ENCODE measurements at regions of chr14 and their contacts with region 1.

Region 1: DNA sequence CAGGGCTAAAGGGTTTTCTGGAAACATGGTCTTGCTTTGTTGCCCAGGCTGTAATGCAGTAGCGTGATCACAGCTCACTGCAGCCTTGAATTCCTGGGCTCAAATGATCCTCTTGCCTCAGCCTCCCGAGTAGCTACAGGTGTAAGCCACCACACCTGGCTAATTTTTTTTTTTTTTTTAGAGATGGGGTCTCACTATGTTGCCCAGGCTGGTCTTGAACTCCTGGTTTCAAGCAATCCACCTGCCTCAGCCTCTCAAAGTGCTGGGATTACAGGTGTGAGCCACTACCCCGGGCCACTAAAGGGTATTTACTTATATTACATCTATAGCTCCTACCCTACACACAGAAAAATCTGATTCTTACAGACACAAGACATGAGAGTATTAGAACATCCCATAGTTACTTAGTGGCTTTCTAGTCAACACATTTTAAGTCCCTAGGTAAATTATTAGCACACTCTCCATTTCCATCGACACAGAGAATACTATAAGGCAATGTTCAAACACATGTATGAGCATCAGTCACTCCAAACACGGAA is 6.2 kb upstream of the DCAF11 start:
- DNase-seq: no peak
- ATAC-seq: peak; percentile 14
- H3K4me3 ChIP-seq: no peak overlapping the region
- H3K4me3 Mint-ChIP-seq: no peak overlapping the region
- H3K27ac ChIP-seq: peak overlapping the region; percentile 44 to 68
- H3K27ac Mint-ChIP-seq: peak overlapping the region; percentile 95
- H3K4me1 ChIP-seq: peaks cover 10 to 13% of the 10 kb centered on the region in 2 donors
- H3K4me1 Mint-ChIP-seq: peaks cover 11% of the 10 kb centered on the region
- H3K27me3 ChIP-seq: no peaks in the 10 kb centered on the region
- H3K27me3 Mint-ChIP-seq: no peaks in the 10 kb centered on the region
- CTCF ChIP-seq: no peak

Region 2: DNA sequence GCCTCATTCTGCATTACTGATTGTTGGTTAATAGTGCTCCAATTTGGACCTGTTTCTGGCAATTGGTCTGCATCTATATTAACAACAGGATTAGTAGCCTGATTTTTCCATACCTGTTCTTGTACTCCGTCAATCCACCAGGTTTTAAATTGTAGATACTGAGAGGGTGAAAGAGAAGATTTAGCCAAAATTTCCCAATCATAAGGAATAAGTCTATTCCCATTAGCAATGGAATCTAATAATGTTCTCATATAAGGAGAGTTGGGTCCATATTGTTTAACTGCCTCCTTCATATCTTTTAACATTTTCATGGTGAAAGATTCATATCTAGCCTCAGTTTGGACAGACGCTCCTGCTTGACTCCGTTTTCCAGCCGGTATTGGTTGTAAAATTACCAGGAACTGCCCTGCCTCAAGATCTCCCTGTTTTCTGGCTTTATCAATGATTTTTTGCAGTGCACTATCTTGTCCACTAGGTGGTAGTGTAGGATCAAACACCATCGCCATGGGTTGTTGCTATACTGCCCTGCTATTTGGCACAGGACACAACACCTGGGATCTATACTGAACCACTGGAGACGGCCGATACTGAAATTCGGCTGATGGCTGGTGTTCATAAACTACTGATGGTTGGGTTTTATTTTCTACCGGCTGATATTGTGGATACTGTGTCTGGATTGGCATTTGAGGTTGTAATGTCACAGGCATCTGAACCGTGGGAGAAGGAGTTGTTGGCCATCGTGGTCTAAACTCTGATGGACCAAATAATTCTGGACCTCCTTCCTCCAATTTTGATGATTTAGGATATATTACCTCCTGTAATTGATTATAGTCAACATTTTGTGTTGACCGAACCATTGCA is 94.5 kb before region 1 on chr14:
- CTCF ChIA-PET with region 1: interaction called, 19 read pairs
- POLR2A ChIA-PET with region 1: no interaction called
- intact Hi-C with region 1: loop called (anchors 1 kb)
- DNase-seq: peak; percentile 83
- ATAC-seq: peak; percentile 92
- H3K4me3 ChIP-seq: no peak overlapping the region
- H3K4me3 Mint-ChIP-seq: no peak overlapping the region
- H3K27ac ChIP-seq: no peak overlapping the region
- H3K27ac Mint-ChIP-seq: no peak overlapping the region
- H3K4me1 ChIP-seq: peaks cover 0 to 3% of the 10 kb centered on the region in 2 donors
- H3K4me1 Mint-ChIP-seq: peaks cover 30% of the 10 kb centered on the region
- H3K27me3 ChIP-seq: no peaks in the 10 kb centered on the region
- H3K27me3 Mint-ChIP-seq: no peaks in the 10 kb centered on the region
- CTCF ChIP-seq: peak; percentile 97

Region 3: DNA sequence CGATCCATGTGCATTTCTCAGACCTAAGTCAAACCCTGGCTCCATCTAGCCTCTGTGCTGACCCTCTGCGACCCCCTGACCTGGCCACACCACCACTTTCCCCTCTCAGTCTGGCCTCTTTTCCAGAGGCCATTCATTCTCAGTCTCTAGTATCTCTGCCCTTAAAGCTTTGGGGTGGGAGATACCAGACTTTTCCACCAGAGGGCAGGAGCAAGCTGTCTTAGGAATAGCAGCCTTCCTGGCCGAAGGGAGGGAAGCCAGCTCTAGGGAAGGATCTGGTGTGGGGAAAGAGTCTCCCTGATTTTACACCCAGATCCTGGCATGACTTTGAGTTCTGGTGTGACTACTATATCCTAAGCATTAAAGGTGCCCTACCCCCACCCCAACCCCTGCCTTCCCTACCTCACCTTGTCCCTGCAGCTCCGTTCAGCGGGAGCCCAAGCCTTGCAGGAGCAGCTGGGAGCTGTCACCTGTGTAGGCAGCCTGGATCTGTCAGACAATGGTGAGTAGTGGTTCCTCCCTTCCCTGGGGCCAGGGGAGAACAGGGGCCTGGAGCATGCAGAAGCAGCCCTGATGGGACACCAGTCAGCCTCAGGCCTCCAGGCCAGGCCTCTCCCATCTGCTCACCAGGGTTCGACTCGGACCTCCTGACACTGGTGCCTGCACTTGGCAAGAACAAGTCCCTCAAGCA is 50.0 kb before region 1 on chr14:
- CTCF ChIA-PET with region 1: interaction called, 220 read pairs
- POLR2A ChIA-PET with region 1: interaction called, 5 read pairs
- intact Hi-C with region 1: loop called (anchors 1 kb)
- DNase-seq: no peak
- ATAC-seq: peak; percentile 68
- H3K4me3 ChIP-seq: no peak overlapping the region
- H3K4me3 Mint-ChIP-seq: no peak overlapping the region
- H3K27ac ChIP-seq: no peak overlapping the region
- H3K27ac Mint-ChIP-seq: no peak overlapping the region
- H3K4me1 ChIP-seq: no peaks in the 10 kb centered on the region
- H3K4me1 Mint-ChIP-seq: peaks cover 1% of the 10 kb centered on the region
- H3K27me3 ChIP-seq: peaks cover 0 to 26% (median 5%) of the 10 kb centered on the region in 4 experiments
- H3K27me3 Mint-ChIP-seq: no peaks in the 10 kb centered on the region
- CTCF ChIP-seq: peak; percentile 75

Region 4: DNA sequence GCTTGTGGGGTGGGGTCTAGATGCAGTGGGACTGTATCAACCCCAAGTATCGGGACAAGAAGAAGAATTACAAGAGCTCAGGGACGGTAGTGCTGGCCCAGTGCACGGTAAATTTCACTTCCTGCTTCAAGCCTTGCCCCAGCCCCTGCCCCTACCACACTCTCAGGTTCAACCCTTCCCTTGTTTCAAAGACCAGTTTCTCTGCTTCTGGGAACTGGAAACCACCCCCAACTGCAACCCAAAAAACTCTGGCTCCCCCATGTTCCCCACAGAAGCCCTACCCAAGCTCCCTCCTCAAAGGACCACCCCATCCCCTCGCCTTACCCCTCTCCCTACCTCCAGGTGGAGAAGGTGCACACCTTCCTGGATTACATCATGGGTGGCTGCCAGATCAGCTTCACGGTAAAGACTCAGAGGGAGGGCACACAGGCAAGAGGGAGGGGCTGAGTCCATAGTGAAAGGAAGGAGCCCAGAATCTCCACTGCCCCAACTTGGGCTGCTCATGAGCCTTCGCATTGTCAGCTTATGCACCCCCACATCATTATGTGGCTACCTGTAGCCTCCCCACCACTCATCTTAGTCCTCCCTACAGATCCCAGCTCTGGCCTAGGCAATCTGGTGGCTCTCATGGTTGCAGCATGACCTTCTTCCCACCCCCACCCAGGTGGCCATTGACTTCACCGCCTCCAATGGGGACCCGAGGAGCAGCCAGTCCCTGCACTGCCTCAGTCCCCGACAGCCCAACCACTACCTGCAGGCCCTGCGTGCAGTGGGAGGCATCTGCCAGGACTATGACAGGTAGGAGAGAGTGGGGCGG is 32.7 kb before region 1 on chr14:
- CTCF ChIA-PET with region 1: interaction called, 75 read pairs
- POLR2A ChIA-PET with region 1: interaction called, 15 read pairs
- intact Hi-C with region 1: no loop called
- DNase-seq: peak; percentile 51
- ATAC-seq: peak; percentile 68
- H3K4me3 ChIP-seq: peak overlapping the region in 1 of 5 experiments; percentile 22
- H3K4me3 Mint-ChIP-seq: peak overlapping the region; percentile 38
- H3K27ac ChIP-seq: peak overlapping the region in 1 of 2 donors; percentile 25
- H3K27ac Mint-ChIP-seq: peak overlapping the region; percentile 81
- H3K4me1 ChIP-seq: peaks cover 24 to 29% of the 10 kb centered on the region in 2 donors
- H3K4me1 Mint-ChIP-seq: peaks cover 33% of the 10 kb centered on the region
- H3K27me3 ChIP-seq: peaks cover 0 to 4% (median 0%) of the 10 kb centered on the region in 4 experiments
- H3K27me3 Mint-ChIP-seq: peaks cover 4% of the 10 kb centered on the region
- CTCF ChIP-seq: no peak

Region 5: GRCh38 chr14:24093901-24094761 is 14.3 kb before region 1 on chr14 and contains the start of gene PCK2:
- CTCF ChIA-PET with region 1: interaction called, 292 read pairs
- POLR2A ChIA-PET with region 1: interaction called, 35 read pairs
- intact Hi-C with region 1: loop called (anchors 1 kb)
- DNase-seq: peak; percentile 81
- ATAC-seq: peak; percentile 66
- H3K4me3 ChIP-seq: peak within 1 kb of the TSS; percentile 62 to 97 (median 89)
- H3K4me3 Mint-ChIP-seq: peak within 1 kb of the TSS; percentile 95
- H3K27ac ChIP-seq: peak within 1 kb of the TSS; percentile 80 to 95
- H3K27ac Mint-ChIP-seq: peak within 1 kb of the TSS; percentile 92
- H3K4me1 ChIP-seq: peaks cover 5 to 35% of the 10 kb centered on the region in 2 donors
- H3K4me1 Mint-ChIP-seq: peaks cover 38% of the 10 kb centered on the region
- H3K27me3 ChIP-seq: no peaks in the 10 kb centered on the region
- H3K27me3 Mint-ChIP-seq: no peaks in the 10 kb centered on the region
- CTCF ChIP-seq: peak; percentile 28
- total RNA-seq, gene PCK2: 34.1 and 40.4 TPM in 2 replicates

Region 6: DNA sequence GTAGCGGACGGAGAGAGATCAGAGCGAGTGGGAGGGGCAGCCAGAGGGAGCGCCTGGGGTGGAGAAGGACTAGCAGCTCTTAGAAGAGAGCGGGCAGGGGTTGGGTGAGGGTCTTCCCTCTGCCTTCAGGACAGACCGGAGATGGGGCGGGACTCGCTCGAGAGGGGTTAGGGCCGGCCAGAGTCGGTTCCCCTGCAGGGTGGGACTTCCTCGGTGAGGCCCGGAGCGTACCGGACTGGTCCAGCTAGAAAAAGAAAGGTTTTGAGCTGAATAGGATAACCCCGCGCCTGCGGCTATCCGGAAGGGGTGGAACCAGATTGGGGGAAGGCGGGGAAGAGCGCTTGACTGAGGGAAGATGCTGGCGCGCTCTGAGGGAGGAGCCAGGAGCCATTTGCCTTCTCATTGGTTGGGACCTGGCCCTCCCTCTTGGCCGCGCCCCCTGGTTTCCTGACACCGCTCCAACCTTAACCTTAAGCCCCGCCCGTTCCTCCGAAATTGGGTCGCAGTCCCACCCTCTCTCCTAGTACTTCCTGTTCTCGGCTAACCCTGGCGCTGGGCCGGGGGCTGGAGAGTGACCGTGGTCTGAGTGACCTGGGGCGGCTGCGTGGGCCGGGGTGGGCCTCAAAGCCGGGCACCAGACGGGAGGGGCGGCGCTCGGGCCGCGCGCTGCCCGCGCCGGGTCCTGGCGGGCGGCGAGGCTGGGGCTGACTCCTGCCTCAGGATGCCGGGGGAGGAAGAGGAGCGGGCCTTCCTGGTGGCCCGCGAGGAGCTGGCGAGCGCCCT is 38.8 kb after region 1 on chr14 and contains the start of gene RNF31:
- CTCF ChIA-PET with region 1: interaction called, 29 read pairs
- POLR2A ChIA-PET with region 1: interaction called, 35 read pairs
- intact Hi-C with region 1: no loop called
- DNase-seq: peak; percentile 98
- ATAC-seq: peak; percentile 84
- H3K4me3 ChIP-seq: peak within 1 kb of the TSS; percentile 83 to 95 (median 94)
- H3K4me3 Mint-ChIP-seq: peak within 1 kb of the TSS; percentile 95
- H3K27ac ChIP-seq: peak within 1 kb of the TSS; percentile 77 to 90
- H3K27ac Mint-ChIP-seq: peak within 1 kb of the TSS; percentile 95
- H3K4me1 ChIP-seq: peaks cover 21 to 35% of the 10 kb centered on the region in 2 donors
- H3K4me1 Mint-ChIP-seq: peaks cover 50% of the 10 kb centered on the region
- H3K27me3 ChIP-seq: no peaks in the 10 kb centered on the region
- H3K27me3 Mint-ChIP-seq: no peaks in the 10 kb centered on the region
- CTCF ChIP-seq: no peak
- total RNA-seq, gene RNF31: 103 and 114 TPM in 2 replicates

Region 7: DNA sequence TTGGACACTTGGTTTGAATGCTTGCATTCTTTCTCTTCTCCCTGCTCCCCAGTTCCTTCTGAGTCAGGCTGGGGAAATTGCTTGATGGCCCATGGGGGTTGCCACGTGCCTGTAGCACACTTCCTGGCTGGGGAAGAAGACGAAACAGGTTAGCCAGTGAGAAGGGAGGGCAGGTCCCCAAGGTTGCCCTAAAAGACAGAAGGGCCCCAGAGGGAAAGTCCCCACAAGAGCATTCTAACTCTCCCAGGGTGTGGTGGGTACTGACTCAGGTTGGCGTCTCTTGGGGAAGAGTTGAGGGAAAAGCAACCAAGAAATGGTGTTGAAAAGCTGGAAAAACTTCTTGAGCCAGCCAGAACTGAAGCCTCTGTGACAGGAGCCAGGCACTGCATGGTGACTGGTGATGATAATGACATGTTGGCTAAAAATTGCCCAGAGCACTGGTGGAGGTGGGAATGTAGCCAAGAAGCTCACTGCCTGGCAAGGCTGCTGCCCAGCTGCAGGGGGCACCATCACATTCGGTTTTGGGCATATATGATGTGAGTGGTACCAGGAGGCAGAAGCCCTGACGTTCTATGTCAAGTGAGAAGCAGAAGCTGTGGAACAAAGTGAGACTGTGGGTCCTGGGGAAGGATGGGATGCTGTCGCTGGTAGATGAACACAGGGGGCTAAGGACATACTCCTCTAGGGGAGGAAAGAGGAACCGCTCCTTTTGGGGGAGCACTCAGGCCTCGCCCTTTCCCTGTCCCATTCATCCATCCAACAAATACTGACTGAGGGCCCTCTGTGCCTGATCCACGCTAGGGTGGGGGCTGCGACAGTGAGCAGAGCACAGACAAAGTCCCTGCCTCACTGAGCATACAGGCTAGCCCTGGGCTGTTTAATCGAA is 171.1 kb after region 1 on chr14:
- CTCF ChIA-PET with region 1: no interaction called
- POLR2A ChIA-PET with region 1: no interaction called
- intact Hi-C with region 1: no loop called
- DNase-seq: peak; percentile 87
- ATAC-seq: peak; percentile 90
- H3K4me3 ChIP-seq: peak overlapping the region in 1 of 5 experiments; percentile 10
- H3K4me3 Mint-ChIP-seq: peak overlapping the region; percentile 75
- H3K27ac ChIP-seq: peak overlapping the region; percentile 65 to 80
- H3K27ac Mint-ChIP-seq: peak overlapping the region; percentile 93
- H3K4me1 ChIP-seq: peaks cover 38 to 60% of the 10 kb centered on the region in 2 donors
- H3K4me1 Mint-ChIP-seq: peaks cover 66% of the 10 kb centered on the region
- H3K27me3 ChIP-seq: no peaks in the 10 kb centered on the region
- H3K27me3 Mint-ChIP-seq: no peaks in the 10 kb centered on the region
- CTCF ChIP-seq: peak; percentile 53

Region 8: GRCh38 chr14:24381363-24382063 is 273.1 kb after region 1 on chr14:
- CTCF ChIA-PET with region 1: no interaction called
- POLR2A ChIA-PET with region 1: no interaction called
- intact Hi-C with region 1: no loop called
- DNase-seq: no peak
- ATAC-seq: no peak
- H3K4me3 ChIP-seq: no peak overlapping the region
- H3K4me3 Mint-ChIP-seq: no peak overlapping the region
- H3K27ac ChIP-seq: no peak overlapping the region
- H3K27ac Mint-ChIP-seq: no peak overlapping the region
- H3K4me1 ChIP-seq: no peaks in the 10 kb centered on the region
- H3K4me1 Mint-ChIP-seq: no peaks in the 10 kb centered on the region
- H3K27me3 ChIP-seq: peaks cover 0 to 4% (median 1%) of the 10 kb centered on the region in 4 experiments
- H3K27me3 Mint-ChIP-seq: peaks cover 9% of the 10 kb centered on the region
- CTCF ChIP-seq: no peak

Measured in B cell (primary cell).